ENCODE measurements at regions of chr6 and their contacts with region 1.

Region 1: GRCh38 chr6:131694831-131695426 is 6.3 kb downstream of the OR2A4 start:
- DNase-seq: peak in 39 of 42 donors; percentile 13 to 79 (median 47)

Region 2: DNA sequence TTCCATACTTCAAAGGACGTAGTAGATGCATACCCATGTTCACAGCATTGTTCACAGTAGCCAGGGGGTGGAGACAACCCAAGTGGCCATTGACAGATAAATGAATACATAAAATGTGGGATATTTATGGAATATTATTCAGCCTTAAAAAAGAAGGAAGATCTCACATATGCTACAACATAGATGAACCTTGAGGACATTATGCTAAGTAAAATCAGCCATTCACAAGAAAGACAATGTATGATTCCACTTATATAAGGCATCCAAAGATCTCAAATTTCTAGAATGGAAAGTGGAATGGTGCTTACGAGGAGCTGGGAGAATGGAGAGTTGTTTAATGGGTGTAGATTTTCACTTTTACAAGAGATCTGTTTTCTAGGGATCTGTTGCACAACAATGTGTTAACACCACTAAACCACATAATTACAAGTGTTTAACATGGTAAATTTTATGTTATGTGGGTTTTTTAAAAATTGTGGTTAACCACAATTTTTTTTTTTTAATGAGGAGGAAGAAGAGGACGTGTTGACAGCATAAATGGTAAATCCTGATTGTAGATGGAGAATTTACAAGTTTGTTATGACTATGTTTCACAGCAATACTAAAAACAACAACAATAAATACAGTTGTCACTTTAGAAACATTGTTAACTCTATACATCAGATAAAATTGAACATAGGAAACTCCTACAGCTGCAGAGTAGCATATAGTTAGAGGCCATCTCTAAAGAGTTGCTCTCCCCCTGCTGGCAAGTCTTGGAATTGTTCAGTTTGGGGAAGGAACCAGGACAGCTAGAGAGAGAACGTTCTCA is 214.7 kb after region 1 on chr6:
- intact Hi-C with region 1: loop called (anchors 10 kb)
- DNase-seq: peak; percentile 10 to 96 (median 84)

Measured in head of caudate nucleus (tissue), 42 donors.